ENCODE measurements at regions of chr2 and their contacts with region 1.

Region 1: DNA sequence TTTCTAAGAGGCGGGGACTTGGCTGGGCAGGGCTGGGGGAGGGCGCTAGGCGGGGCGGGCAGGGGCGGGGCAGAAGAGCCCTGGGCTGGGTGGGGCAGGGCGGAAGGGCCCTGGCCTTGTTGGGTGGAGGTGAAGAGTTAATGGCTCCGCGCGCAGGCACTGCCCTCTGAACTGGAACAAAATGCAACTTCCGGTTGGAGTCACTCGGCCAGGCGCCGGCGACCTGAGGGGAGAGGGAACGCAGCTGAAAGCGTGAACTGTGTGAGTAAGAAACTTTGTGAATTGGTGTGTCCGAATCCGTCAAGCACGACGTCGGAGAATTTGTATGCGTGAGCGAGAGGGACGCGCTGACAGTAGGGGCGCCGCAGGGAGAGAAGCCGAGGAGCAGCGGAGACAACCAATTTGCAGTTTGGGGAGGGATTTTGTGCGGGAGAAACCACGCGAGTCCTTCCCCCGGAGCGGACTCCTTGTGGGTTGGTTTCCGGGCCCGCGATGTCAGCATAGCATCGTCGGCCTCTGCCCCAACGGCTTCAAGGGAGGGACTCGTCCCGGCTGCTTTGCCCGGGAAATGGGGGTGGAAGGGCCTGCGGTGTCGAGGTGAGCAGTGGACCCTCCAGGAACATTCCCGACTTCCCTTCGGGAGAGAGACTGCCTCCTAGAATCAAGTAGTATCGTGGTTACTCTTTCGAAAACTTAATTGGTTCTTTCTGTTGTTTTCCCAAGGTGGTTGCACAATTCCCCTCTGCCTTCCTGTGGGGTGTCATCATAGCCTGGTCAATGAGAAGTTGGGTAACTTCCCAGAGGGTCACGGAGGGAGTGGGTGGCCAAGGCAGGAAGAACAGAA is at the start of gene TANK:
- DNase-seq: peak; percentile 94 to 95
- H3K4me3 ChIP-seq: peak within 1 kb of the TSS; percentile 89
- H3K4me3 Mint-ChIP-seq: peak within 1 kb of the TSS; percentile 94
- H3K27ac Mint-ChIP-seq: peak within 1 kb of the TSS; percentile 98
- H3K4me1 ChIP-seq: peaks cover 20% of the 10 kb centered on the region
- H3K4me1 Mint-ChIP-seq: peaks cover 8% of the 10 kb centered on the region
- H3K27me3 ChIP-seq: no peaks in the 10 kb centered on the region
- H3K27me3 Mint-ChIP-seq: no peaks in the 10 kb centered on the region
- CTCF ChIP-seq: no peak
- total RNA-seq, gene TANK: 42.7 and 56.0 TPM in 2 replicates

Region 2: GRCh38 chr2:160816916-160817499 is 343.4 kb before region 1 on chr2:
- CTCF ChIA-PET with region 1: no interaction called
- POLR2A ChIA-PET with region 1: no interaction called
- intact Hi-C with region 1: no loop called
- DNase-seq: no peak
- H3K4me3 ChIP-seq: no peak overlapping the region
- H3K4me3 Mint-ChIP-seq: no peak overlapping the region
- H3K27ac Mint-ChIP-seq: no peak overlapping the region
- H3K4me1 ChIP-seq: no peaks in the 10 kb centered on the region
- H3K4me1 Mint-ChIP-seq: no peaks in the 10 kb centered on the region
- H3K27me3 ChIP-seq: no peaks in the 10 kb centered on the region
- H3K27me3 Mint-ChIP-seq: no peaks in the 10 kb centered on the region
- CTCF ChIP-seq: no peak

Region 3: GRCh38 chr2:161063157-161063954 is 97.1 kb before region 1 on chr2:
- CTCF ChIA-PET with region 1: no interaction called
- POLR2A ChIA-PET with region 1: no interaction called
- intact Hi-C with region 1: loop called (anchors 2 kb)
- DNase-seq: peak; percentile 83 to 88
- H3K4me3 ChIP-seq: no peak overlapping the region
- H3K4me3 Mint-ChIP-seq: peak overlapping the region; percentile 13
- H3K27ac Mint-ChIP-seq: no peak overlapping the region
- H3K4me1 ChIP-seq: 0 out of 2 replicates have a peak, but pooled peaks cover 4% of the 10 kb centered on the region
- H3K4me1 Mint-ChIP-seq: peaks cover 6% of the 10 kb centered on the region
- H3K27me3 ChIP-seq: no peaks in the 10 kb centered on the region; the same call in 1 of the 2 replicates
- H3K27me3 Mint-ChIP-seq: no peaks in the 10 kb centered on the region
- CTCF ChIP-seq: peak; percentile 92 to 93

Region 4: GRCh38 chr2:161104054-161104553 is 56.3 kb before region 1 on chr2:
- CTCF ChIA-PET with region 1: no interaction called
- POLR2A ChIA-PET with region 1: no interaction called
- intact Hi-C with region 1: loop called (anchors 5 kb)
- DNase-seq: no peak
- H3K4me3 ChIP-seq: no peak overlapping the region
- H3K4me3 Mint-ChIP-seq: no peak overlapping the region
- H3K27ac Mint-ChIP-seq: peak overlapping the region; percentile 58
- H3K4me1 ChIP-seq: peaks cover 17% of the 10 kb centered on the region
- H3K4me1 Mint-ChIP-seq: peaks cover 12% of the 10 kb centered on the region
- H3K27me3 ChIP-seq: no peaks in the 10 kb centered on the region
- H3K27me3 Mint-ChIP-seq: no peaks in the 10 kb centered on the region
- CTCF ChIP-seq: no peak

Region 5: GRCh38 chr2:161113693-161114575 is 46.5 kb before region 1 on chr2:
- CTCF ChIA-PET with region 1: no interaction called
- POLR2A ChIA-PET with region 1: no interaction called
- intact Hi-C with region 1: loop called (anchors 1 kb)
- DNase-seq: no peak
- H3K4me3 ChIP-seq: no peak overlapping the region
- H3K4me3 Mint-ChIP-seq: no peak overlapping the region
- H3K27ac Mint-ChIP-seq: peak overlapping the region; percentile 49
- H3K4me1 ChIP-seq: peaks cover 30% of the 10 kb centered on the region
- H3K4me1 Mint-ChIP-seq: peaks cover 27% of the 10 kb centered on the region
- H3K27me3 ChIP-seq: no peaks in the 10 kb centered on the region
- H3K27me3 Mint-ChIP-seq: no peaks in the 10 kb centered on the region
- CTCF ChIP-seq: no peak

Region 6: DNA sequence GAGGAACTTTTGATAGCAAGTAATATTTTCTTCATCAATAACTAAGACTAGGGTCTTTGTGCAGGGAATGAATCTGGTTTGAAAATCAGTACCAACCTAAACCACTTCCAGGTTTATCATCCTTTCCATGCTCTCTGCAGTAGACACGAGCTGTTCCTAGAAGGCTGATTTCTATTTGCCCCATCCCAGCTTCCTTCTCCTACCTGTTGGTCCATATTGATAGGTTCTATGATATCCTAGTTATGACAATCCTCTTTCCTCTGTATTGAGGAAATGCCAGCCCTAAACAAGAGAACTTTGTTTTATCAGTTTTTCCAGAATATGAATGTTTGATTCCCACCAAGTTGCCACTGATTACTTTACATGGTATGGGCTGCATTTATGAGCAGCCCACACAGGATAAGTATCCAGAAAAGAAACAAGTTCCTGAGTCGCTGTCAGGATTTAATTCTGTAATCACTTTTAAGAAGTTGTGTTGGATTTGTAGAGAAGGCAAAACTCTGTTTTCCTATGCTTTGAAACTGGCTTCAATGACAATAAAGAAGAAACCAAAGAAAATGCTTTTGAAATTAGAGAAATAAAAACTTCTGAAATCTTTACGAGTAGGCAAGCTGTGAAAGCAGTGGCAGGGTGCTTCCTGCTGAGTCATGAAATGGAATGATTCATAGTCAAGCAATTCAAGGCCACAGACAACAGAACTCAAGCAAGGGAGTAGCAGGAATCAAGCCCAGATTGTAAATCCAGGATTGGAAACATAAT is 37.5 kb before region 1 on chr2:
- CTCF ChIA-PET with region 1: no interaction called
- POLR2A ChIA-PET with region 1: no interaction called
- intact Hi-C with region 1: loop called (anchors 1 kb)
- DNase-seq: peak; percentile 52 to 59
- H3K4me3 ChIP-seq: no peak overlapping the region
- H3K4me3 Mint-ChIP-seq: peak overlapping the region; percentile 68
- H3K27ac Mint-ChIP-seq: peak overlapping the region; percentile 95
- H3K4me1 ChIP-seq: peaks cover 37% of the 10 kb centered on the region
- H3K4me1 Mint-ChIP-seq: peaks cover 22% of the 10 kb centered on the region
- H3K27me3 ChIP-seq: no peaks in the 10 kb centered on the region
- H3K27me3 Mint-ChIP-seq: no peaks in the 10 kb centered on the region
- CTCF ChIP-seq: no peak

Region 7: GRCh38 chr2:161134547-161135518 is 25.6 kb before region 1 on chr2:
- CTCF ChIA-PET with region 1: no interaction called
- POLR2A ChIA-PET with region 1: no interaction called
- intact Hi-C with region 1: loop called (anchors 2 kb)
- DNase-seq: peak; percentile 26 to 54
- H3K4me3 ChIP-seq: no peak overlapping the region
- H3K4me3 Mint-ChIP-seq: peak overlapping the region; percentile 37
- H3K27ac Mint-ChIP-seq: peak overlapping the region; percentile 90
- H3K4me1 ChIP-seq: peaks cover 33% of the 10 kb centered on the region
- H3K4me1 Mint-ChIP-seq: peaks cover 21% of the 10 kb centered on the region
- H3K27me3 ChIP-seq: no peaks in the 10 kb centered on the region
- H3K27me3 Mint-ChIP-seq: no peaks in the 10 kb centered on the region
- CTCF ChIP-seq: no peak

Region 8: DNA sequence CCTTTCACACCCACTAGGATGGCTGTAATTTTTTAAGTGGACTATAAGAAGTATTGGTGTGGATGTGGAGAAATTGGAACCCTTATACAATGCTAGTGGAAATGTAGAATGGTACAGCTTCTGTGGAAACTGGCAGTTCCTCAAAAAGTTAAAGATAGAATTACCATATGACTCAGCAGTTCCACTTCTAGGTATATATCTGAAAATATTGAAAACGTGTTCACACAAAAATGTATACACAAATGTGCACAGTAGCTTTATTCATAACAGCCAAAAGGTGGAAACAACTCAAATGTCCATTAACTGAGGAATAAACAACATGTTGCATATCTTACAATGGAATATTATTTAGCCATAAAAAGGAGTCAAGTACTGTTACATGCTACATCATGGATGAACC is 17.5 kb after region 1 on chr2:
- CTCF ChIA-PET with region 1: no interaction called
- POLR2A ChIA-PET with region 1: no interaction called
- intact Hi-C with region 1: no loop called
- DNase-seq: no peak
- H3K4me3 ChIP-seq: no peak overlapping the region
- H3K4me3 Mint-ChIP-seq: no peak overlapping the region
- H3K27ac Mint-ChIP-seq: no peak overlapping the region
- H3K4me1 ChIP-seq: no peaks in the 10 kb centered on the region
- H3K4me1 Mint-ChIP-seq: peaks cover 2% of the 10 kb centered on the region
- H3K27me3 ChIP-seq: no peaks in the 10 kb centered on the region
- H3K27me3 Mint-ChIP-seq: no peaks in the 10 kb centered on the region
- CTCF ChIP-seq: no peak

Measured in Caco-2 (cell line).